Aorta (tissue), 5 donors: ENCODE measurements at regions of chr12 and their contacts with region 1.

Region 1: GRCh38 chr12:11071414-11071813 is 9.3 kb upstream of the TAS2R46 start:
- DNase-seq: no peak
- ATAC-seq: no peak
- H3K4me3 ChIP-seq: no peak overlapping the region
- H3K27ac ChIP-seq: no peak overlapping the region
- H3K4me1 ChIP-seq: no peaks in the 10 kb centered on the region
- H3K27me3 ChIP-seq: no peaks in the 10 kb centered on the region

Region 2: GRCh38 chr12:10936506-10936905 is 134.9 kb before region 1 on chr12:
- intact Hi-C with region 1: no loop called
- DNase-seq: no peak
- ATAC-seq: no peak
- H3K4me3 ChIP-seq: no peak overlapping the region
- H3K27ac ChIP-seq: no peak overlapping the region
- H3K4me1 ChIP-seq: no peaks in the 10 kb centered on the region
- H3K27me3 ChIP-seq: no peaks in the 10 kb centered on the region

Region 3: DNA sequence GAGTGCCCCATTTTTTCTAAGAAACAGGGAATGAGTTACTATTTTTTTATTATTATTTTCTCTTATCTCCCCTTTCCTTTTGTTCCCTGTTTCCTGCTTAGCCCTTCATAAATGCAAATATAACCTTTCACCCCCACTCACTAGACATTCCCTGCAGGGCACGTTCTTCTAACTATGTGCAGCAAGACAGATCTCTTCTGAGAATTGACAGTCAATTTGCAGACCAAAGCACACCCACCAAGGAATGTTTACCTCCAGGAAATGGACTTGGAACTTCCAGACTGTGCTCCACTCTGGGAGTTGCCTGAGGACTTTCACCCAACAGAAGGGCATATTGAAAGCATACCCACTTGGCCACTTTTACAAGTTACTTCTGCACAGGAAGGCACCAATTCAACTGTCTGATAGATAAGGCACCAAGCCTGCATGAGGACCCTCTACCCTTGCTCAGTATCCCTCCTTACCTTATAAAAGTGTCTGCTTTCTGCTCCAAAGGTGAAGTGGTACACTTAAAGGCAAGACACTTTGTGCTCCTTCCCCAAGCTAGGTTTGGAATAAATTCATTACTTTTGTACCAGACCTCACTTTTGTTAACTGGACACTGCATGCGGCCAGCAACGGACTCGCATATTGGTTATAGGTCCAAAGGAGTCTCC is 55.5 kb before region 1 on chr12:
- intact Hi-C with region 1: loop called (anchors 2 to 5 kb)
- DNase-seq: no peak
- ATAC-seq: no peak
- H3K4me3 ChIP-seq: no peak overlapping the region
- H3K27ac ChIP-seq: no peak overlapping the region
- H3K4me1 ChIP-seq: no peaks in the 10 kb centered on the region
- H3K27me3 ChIP-seq: no peaks in the 10 kb centered on the region